ENCODE measurements at regions of chr3 and their contacts with region 1.

Region 1: GRCh38 chr3:136861890-136862616 is at the start of gene NCK1:
- DNase-seq: peak; percentile 98 to 99
- H3K4me3 ChIP-seq: peak within 1 kb of the TSS; percentile 95
- H3K4me3 Mint-ChIP-seq: peak within 1 kb of the TSS; percentile 94
- H3K27ac Mint-ChIP-seq: peak within 1 kb of the TSS; percentile 94
- H3K4me1 ChIP-seq: peaks cover 18% of the 10 kb centered on the region; the same call in 1 of the 2 replicates
- H3K4me1 Mint-ChIP-seq: peaks cover 20% of the 10 kb centered on the region
- H3K27me3 ChIP-seq: no peaks in the 10 kb centered on the region
- H3K27me3 Mint-ChIP-seq: no peaks in the 10 kb centered on the region
- CTCF ChIP-seq: no peak
- total RNA-seq, gene NCK1: 37.3 and 41.2 TPM in 2 replicates

Region 2: GRCh38 chr3:136516656-136517055 is 345.4 kb before region 1 on chr3:
- CTCF ChIA-PET with region 1: no interaction called
- POLR2A ChIA-PET with region 1: no interaction called
- intact Hi-C with region 1: no loop called
- DNase-seq: no peak
- H3K4me3 ChIP-seq: no peak overlapping the region
- H3K4me3 Mint-ChIP-seq: no peak overlapping the region
- H3K27ac Mint-ChIP-seq: no peak overlapping the region
- H3K4me1 ChIP-seq: no peaks in the 10 kb centered on the region
- H3K4me1 Mint-ChIP-seq: no peaks in the 10 kb centered on the region
- H3K27me3 ChIP-seq: no peaks in the 10 kb centered on the region
- H3K27me3 Mint-ChIP-seq: no peaks in the 10 kb centered on the region
- CTCF ChIP-seq: no peak

Region 3: DNA sequence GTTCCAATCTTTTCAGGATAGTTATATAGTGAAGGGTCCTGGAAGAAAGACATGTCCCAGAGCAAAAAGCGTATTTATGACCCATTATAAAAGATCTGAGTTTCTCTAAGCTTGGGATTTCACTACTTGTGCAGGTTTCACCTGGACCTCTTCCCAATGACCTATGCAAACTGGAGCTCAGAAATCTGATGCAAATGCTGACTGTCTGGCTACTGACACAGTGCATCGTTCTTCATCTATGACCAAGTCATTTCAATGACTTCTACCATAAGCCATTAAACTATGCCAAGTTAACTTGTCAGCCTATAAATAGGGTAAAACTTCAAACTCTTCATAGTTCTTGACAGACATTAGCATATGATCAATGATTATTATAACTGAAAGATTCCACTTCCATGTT is 121.0 kb before region 1 on chr3:
- CTCF ChIA-PET with region 1: no interaction called
- POLR2A ChIA-PET with region 1: no interaction called
- intact Hi-C with region 1: no loop called
- DNase-seq: no peak
- H3K4me3 ChIP-seq: no peak overlapping the region
- H3K4me3 Mint-ChIP-seq: no peak overlapping the region
- H3K27ac Mint-ChIP-seq: no peak overlapping the region
- H3K4me1 ChIP-seq: no peaks in the 10 kb centered on the region
- H3K4me1 Mint-ChIP-seq: peaks cover 6% of the 10 kb centered on the region
- H3K27me3 ChIP-seq: no peaks in the 10 kb centered on the region
- H3K27me3 Mint-ChIP-seq: no peaks in the 10 kb centered on the region
- CTCF ChIP-seq: no peak

Region 4: DNA sequence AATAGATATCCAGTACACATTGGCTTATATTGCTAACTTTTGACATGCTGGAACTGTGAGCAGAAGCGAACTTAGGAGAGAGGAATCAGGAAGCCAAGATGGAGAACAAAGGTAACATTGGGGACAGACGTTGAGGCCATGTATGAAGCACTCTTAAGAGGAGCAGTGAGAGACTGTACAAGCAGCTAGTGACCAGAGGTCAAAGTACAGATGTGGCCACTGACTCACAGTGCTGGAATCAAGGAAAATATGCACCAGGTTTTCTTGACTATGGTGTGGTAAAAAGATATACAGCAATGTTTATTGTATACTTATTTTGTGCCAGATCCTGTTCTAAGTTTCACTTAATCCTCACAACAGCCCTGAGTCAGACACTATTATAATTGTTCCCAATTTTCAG is 93.8 kb after region 1 on chr3:
- CTCF ChIA-PET with region 1: no interaction called
- POLR2A ChIA-PET with region 1: interaction called, 5 read pairs
- intact Hi-C with region 1: loop called (anchors 1 kb)
- DNase-seq: peak; percentile 62 to 76
- H3K4me3 ChIP-seq: no peak overlapping the region
- H3K4me3 Mint-ChIP-seq: peak overlapping the region; percentile 27
- H3K27ac Mint-ChIP-seq: peak overlapping the region; percentile 78
- H3K4me1 ChIP-seq: peaks cover 40% of the 10 kb centered on the region
- H3K4me1 Mint-ChIP-seq: peaks cover 41% of the 10 kb centered on the region
- H3K27me3 ChIP-seq: no peaks in the 10 kb centered on the region
- H3K27me3 Mint-ChIP-seq: no peaks in the 10 kb centered on the region
- CTCF ChIP-seq: no peak

Measured in Caco-2 (cell line).